PC-3 (cell line): ENCODE measurements at regions of chr16 and their contacts with region 1.

Region 1: DNA sequence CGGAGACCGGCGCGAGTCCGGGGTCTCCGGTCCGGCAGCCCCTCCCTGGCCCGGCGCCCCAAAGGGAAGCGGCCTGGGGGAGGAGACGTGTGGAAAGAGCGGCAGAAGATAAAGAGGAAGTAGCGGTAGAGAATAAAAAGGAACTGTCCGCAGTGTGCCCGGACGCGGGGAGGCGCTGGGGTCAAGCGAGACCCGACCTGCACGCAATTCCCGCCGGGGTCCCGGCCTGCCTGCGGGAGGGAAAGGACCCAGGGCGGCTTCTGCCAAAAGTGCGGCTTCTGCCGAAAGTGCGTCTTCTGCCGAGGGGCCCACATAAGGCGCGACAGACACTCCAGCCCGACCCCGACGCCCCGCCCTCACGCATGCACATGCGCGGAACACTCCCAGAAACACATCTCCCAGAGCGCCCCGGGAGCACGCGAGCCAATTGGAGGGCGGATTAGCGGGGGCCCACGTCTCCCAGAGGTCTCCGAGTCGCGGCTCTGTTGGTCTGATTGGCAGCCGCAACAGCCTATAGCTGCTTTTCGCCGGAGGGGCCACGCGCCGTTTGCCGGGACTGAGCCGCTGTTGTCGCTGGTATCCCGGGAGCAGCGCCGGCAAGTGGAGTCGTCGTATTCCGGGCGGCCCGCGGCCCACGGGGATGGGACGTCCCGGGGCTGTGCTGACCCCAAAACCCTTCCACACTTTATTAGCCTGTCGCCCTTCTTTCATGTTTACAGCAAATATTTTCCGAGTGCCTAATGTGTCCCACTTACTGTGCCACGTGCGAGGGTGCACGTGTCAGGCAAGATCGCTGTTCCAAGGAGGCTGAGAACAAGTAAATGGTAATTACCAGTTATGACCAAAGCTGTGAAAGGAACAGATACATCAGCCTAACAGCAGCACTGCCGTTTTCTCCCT is 8.0 kb upstream of the MEFV start:
- DNase-seq: peak; percentile 94
- ATAC-seq: peak; percentile 96
- H3K4me3 ChIP-seq: peak overlapping the region; percentile 77
- H3K27ac ChIP-seq: peak overlapping the region; percentile 90
- H3K4me1 ChIP-seq: peaks cover 6% of the 10 kb centered on the region; the same call in 1 of the 2 replicates
- H3K27me3 ChIP-seq: no peaks in the 10 kb centered on the region
- CTCF ChIP-seq: no peak

Region 2: GRCh38 chr16:3282730-3283524 is 18.5 kb after region 1 on chr16 and contains the start of gene ZNF263:
- CTCF ChIA-PET with region 1: no interaction called
- POLR2A ChIA-PET with region 1: interaction called, 6 read pairs
- intact Hi-C with region 1: loop called (anchors 1 kb)
- DNase-seq: peak; percentile 93
- ATAC-seq: peak; percentile 87
- H3K4me3 ChIP-seq: peak within 1 kb of the TSS; percentile 76
- H3K27ac ChIP-seq: peak within 1 kb of the TSS; percentile 98
- H3K4me1 ChIP-seq: peaks cover 6% of the 10 kb centered on the region
- H3K27me3 ChIP-seq: no peaks in the 10 kb centered on the region
- CTCF ChIP-seq: no peak
- total RNA-seq, gene ZNF263: 52.2 and 68.7 TPM in 2 replicates

Region 3: GRCh38 chr16:3503523-3503922 is 239.1 kb after region 1 on chr16:
- CTCF ChIA-PET with region 1: no interaction called
- POLR2A ChIA-PET with region 1: no interaction called
- intact Hi-C with region 1: loop called (anchors 5 kb)
- DNase-seq: no peak
- ATAC-seq: no peak
- H3K4me3 ChIP-seq: no peak overlapping the region
- H3K27ac ChIP-seq: no peak overlapping the region
- H3K4me1 ChIP-seq: peaks cover 4% of the 10 kb centered on the region; the same call in 1 of the 2 replicates
- H3K27me3 ChIP-seq: no peaks in the 10 kb centered on the region
- CTCF ChIP-seq: no peak